Mammary epithelial cell (primary cell): ENCODE measurements at regions of chr11 and their contacts with region 1.

Region 1: GRCh38 chr11:8813658-8814057 is 97.3 kb upstream of the AKIP1 start:
- DNase-seq: peak; percentile 72
- H3K4me3 ChIP-seq: no peak overlapping the region
- H3K27ac ChIP-seq: peak overlapping the region; percentile 94
- H3K4me1 ChIP-seq: peaks cover 46% of the 10 kb centered on the region
- H3K27me3 ChIP-seq: no peaks in the 10 kb centered on the region
- CTCF ChIP-seq: peak; percentile 91 to 93

Region 2: GRCh38 chr11:8225589-8226036 is 588.0 kb before region 1 on chr11:
- CTCF ChIA-PET with region 1: no interaction called
- dilution Hi-C with region 1: no loop called
- in situ Hi-C with region 1: no loop called
- intact Hi-C with region 1: loop called (anchors 1 kb)
- DNase-seq: no peak
- H3K4me3 ChIP-seq: no peak overlapping the region
- H3K27ac ChIP-seq: no peak overlapping the region
- H3K4me1 ChIP-seq: peaks cover 39% of the 10 kb centered on the region
- H3K27me3 ChIP-seq: no peaks in the 10 kb centered on the region
- CTCF ChIP-seq: peak; percentile 63 to 93

Region 3: GRCh38 chr11:8688414-8689362 is 125.0 kb before region 1 on chr11:
- CTCF ChIA-PET with region 1: interaction called, 17 read pairs
- dilution Hi-C with region 1: no loop called
- in situ Hi-C with region 1: loop called in 1 of 2 experiments (anchors 10 kb)
- intact Hi-C with region 1: loop called (anchors 1 kb)
- DNase-seq: peak; percentile 95
- H3K4me3 ChIP-seq: peak overlapping the region; percentile 51 to 62 (median 52)
- H3K27ac ChIP-seq: peak overlapping the region; percentile 52
- H3K4me1 ChIP-seq: peaks cover 36% of the 10 kb centered on the region
- H3K27me3 ChIP-seq: no peaks in the 10 kb centered on the region
- CTCF ChIP-seq: peak in 1 of 2 donors; percentile 8

Region 4: GRCh38 chr11:8768625-8769333 is 44.9 kb before region 1 on chr11:
- CTCF ChIA-PET with region 1: no interaction called
- dilution Hi-C with region 1: no loop called
- in situ Hi-C with region 1: no loop called
- intact Hi-C with region 1: loop called (anchors 1 kb)
- DNase-seq: peak; percentile 66
- H3K4me3 ChIP-seq: no peak overlapping the region
- H3K27ac ChIP-seq: peak overlapping the region; percentile 96
- H3K4me1 ChIP-seq: peaks cover 81% of the 10 kb centered on the region
- H3K27me3 ChIP-seq: no peaks in the 10 kb centered on the region
- CTCF ChIP-seq: peak; percentile 19 to 60

Region 5: DNA sequence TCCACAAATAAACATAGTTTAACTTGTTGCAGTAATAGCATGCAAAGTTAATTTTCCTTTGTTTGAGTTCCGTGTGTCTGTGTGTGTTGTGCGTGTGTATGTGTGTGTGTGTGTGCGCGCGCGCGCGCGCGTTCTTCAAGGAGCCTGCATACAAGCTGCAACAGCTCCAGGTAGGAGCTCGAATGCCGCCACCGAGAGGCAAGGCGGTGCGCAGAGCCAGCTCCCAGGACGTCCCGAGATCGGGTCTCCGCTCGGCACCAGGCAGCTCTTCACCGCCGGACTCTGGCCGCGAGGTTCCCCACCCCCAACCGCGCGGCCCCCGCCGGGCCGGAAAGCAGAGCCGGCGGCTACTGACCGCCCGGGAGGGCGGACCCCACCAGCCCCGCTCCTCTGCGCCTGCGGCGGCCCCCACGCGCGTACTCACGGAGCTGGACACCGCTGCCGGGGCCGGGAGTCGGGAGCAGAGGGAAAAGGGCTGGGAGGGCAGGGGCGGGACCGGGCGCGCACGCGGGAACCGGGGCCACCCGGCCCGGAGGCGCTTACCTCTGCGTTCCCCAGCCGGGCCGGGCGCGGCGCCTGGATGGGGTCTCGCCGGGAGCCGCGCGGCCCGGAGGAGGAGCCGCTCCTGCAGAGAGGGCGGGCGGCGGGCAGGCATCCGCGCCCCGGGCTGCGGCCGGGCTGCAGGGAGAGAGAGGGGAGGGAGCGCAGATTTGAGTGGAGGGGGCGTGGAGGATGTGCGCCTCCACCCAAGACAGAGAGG is 56.9 kb after region 1 on chr11:
- CTCF ChIA-PET with region 1: interaction called, 28 read pairs
- dilution Hi-C with region 1: no loop called
- in situ Hi-C with region 1: no loop called
- intact Hi-C with region 1: loop called (anchors 1 kb)
- DNase-seq: peak; percentile 74
- H3K4me3 ChIP-seq: peak overlapping the region; percentile 49 to 78 (median 76)
- H3K27ac ChIP-seq: peak overlapping the region; percentile 6
- H3K4me1 ChIP-seq: peaks cover 13% of the 10 kb centered on the region
- H3K27me3 ChIP-seq: no peaks in the 10 kb centered on the region
- CTCF ChIP-seq: peak in 1 of 2 donors; percentile 16

Region 6: DNA sequence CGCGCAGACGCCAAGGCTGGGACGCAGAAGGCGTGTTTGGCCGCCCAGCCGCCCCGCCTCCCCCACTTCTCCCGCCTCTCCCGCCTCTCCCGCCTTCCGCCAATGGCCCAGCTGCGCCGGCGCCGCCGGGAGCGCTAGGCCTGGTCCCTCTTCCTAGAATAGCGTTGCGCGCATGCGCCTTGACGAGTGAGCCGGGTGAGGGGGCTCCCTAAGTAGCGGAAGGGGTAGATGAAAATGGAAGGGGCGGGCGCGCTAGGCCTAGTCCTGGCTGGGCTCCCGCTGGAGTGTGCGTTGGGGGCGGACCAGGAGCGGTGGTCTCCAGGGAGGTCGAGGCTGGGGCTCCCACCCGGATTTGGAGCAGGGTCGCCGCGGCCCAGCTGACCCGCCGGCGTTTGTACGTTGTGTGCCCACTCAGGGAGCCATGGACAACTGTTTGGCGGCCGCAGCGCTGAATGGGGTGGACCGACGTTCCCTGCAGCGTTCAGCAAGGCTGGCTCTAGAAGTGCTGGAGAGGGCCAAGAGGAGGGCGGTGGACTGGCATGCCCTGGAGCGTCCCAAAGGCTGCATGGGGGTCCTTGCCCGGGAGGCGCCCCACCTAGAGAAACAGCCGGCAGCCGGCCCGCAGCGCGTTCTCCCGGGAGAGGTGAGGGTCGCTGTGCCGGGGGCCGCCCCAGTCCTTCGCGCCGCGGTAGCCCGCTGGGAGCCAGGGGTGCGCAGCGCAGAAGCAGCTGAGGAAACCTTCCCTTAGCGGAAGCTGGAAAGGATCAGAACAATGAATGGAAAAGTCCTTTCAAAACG is 97.6 kb after region 1 on chr11 and contains the start of gene AKIP1:
- CTCF ChIA-PET with region 1: no interaction called
- dilution Hi-C with region 1: no loop called
- in situ Hi-C with region 1: loop called in 1 of 2 experiments (anchors 5 kb)
- intact Hi-C with region 1: loop called (anchors 1 kb)
- DNase-seq: peak; percentile 91
- H3K4me3 ChIP-seq: peak within 1 kb of the TSS; percentile 83 to 94 (median 83)
- H3K27ac ChIP-seq: peak within 1 kb of the TSS; percentile 55
- H3K4me1 ChIP-seq: peaks cover 40% of the 10 kb centered on the region
- H3K27me3 ChIP-seq: no peaks in the 10 kb centered on the region
- CTCF ChIP-seq: no peak
- total RNA-seq, gene AKIP1: 31.7 to 35.2 TPM